Activated CD8-positive, alpha-beta memory T cell treated with anti-CD3 and anti-CD28 coated beads, Interleukin-2, amount 10 ng/mL, durations not matched to agents 7 days and 5 days (primary cell): ENCODE measurements at regions of chr15 and their contacts with region 1.

Region 1: DNA sequence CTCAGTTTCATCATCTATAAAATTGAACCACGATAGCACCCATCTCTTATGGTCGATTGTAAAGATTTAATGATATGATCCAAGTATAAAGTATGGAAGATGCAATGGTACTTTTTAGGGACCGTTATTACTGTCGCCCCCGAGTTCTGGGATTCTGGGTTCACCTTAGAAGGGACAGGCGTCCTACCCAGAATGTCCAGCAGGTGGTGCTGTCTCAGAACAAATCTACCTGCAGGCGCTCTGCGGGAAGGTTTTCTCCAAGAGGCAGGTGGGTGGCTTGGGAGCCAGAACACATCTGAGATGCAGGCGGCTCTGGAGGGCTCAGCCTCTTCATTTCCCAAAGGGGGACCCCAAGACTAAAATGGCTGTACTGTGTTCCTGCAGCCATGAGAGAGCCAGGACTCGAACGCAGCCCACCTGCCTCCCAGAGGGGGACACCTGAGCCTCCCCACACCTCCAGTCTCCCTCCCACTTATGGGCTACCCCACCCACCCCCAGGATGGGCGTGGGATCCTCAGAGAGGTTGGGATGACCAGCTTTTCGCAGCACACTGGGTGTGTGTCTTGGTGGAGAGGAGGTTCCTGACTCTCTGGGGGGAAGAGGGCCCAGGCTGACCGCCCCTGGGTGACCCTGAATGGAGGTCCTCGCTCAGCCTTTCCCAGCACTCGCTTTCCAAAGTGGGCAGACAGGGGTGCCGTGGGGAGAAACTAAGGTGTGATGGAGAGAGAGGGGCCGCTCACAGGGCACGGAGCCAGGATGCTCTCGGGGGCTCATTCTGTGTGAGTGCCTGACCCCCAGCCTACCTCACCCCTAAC is 28.1 kb upstream of the CORO2B start:
- DNase-seq: peak; percentile 82
- ATAC-seq: no peak
- H3K4me3 Mint-ChIP-seq: no peak overlapping the region
- H3K27ac Mint-ChIP-seq: no peak overlapping the region
- H3K4me1 Mint-ChIP-seq: peaks cover 10% of the 10 kb centered on the region
- H3K27me3 Mint-ChIP-seq: peaks cover 43% of the 10 kb centered on the region

Region 2: DNA sequence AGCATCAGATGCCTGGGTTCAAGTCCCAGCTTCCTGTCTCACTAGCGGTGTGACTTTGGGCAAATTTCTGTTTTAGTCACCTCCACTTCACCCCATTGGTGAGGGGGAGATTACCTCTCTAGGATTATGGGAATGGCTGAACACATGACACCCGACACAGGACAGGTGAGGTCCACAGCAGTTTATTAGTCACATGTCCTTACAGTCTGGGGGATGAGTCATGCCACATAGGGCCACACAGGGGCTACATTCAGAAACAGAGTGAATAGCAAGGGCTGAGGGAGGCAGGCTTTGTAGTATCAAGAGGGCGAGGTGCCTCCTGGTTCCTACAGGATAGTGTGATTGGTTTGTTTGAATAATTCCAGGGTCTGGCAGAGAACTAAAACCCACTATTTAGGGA is 103.5 kb before region 1 on chr15:
- CTCF ChIA-PET with region 1: no interaction called
- DNase-seq: peak; percentile 11
- ATAC-seq: no peak
- H3K4me3 Mint-ChIP-seq: no peak overlapping the region
- H3K27ac Mint-ChIP-seq: no peak overlapping the region
- H3K4me1 Mint-ChIP-seq: no peaks in the 10 kb centered on the region
- H3K27me3 Mint-ChIP-seq: peaks cover 77% of the 10 kb centered on the region

Region 3: DNA sequence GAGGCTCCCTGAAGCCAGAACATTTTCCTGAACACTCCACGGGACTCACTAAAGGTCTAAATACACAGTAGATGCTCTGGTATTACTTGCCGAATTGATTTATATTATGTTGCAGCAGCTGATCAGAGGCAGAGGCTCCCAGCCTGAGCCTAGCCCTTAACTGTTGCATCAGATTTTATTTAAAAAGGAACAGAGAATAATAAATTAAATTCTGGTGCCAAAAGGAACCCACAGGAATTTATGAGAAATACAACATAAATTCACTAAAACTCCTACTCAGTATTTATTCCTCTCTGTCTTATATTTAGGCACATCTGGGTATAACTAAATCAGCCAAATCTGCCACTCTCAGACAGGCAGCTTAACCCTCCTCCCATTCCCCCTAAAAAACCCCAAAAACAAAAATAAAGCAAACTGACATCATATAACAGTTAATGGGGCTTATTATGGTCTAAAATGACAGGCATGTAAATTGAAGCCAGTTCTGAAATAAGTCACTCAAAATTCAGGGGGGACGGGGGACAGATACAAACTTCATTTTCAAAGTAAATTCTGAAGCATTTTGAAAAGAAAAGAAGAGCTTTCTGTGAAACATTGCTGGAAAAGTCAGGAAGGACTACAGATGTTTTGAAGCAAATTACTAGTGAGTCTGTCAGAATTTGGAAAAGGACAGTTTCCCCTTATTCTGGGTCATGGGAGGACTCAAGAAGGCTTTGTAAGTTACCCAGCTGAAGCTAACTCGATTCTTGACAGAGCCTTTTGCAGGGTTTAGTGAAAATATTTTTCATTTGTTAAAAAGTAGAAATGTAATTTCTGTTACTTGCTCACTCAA is 25.7 kb before region 1 on chr15:
- CTCF ChIA-PET with region 1: interaction called, 13 read pairs
- DNase-seq: no peak
- ATAC-seq: no peak
- H3K4me3 Mint-ChIP-seq: no peak overlapping the region
- H3K27ac Mint-ChIP-seq: no peak overlapping the region
- H3K4me1 Mint-ChIP-seq: peaks cover 37% of the 10 kb centered on the region
- H3K27me3 Mint-ChIP-seq: peaks cover 70% of the 10 kb centered on the region

Region 4: DNA sequence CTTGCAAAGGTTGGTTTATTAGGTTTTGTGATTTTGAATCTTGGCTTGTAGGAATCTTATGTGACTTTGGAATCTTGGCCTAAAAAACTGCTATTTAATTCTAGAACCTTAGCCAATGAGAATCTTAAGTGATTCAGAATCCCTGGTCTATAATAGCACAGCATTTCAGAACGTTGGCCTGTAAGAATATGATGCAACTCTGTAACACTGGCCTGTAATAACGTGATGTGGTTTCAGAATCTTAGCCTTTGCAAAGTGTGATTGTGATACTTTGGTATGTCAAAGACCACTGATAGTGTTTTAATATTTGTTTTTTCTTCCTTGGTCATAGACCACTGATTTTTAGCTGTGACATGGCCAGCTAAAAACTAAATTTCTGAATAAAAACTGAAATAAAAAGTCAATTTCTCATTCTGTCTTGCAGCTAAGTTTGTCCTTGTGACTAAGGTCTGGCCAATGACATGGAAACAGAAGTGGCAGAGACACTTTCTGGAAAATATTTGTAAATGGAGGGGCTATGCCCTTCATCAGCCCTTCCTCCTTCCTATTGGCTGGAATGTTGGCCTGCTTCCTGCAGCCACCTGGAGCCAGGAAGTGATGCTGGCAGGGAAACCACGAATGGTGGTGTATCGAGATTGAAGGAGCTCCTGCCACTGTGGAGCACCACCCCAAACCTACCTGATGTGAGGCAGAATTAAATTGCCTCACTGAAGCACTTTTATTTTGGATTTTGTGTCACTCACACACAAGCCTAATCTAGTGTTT is 14.2 kb before region 1 on chr15:
- CTCF ChIA-PET with region 1: interaction called, 23 read pairs
- DNase-seq: no peak
- ATAC-seq: no peak
- H3K4me3 Mint-ChIP-seq: no peak overlapping the region
- H3K27ac Mint-ChIP-seq: no peak overlapping the region
- H3K4me1 Mint-ChIP-seq: peaks cover 2% of the 10 kb centered on the region
- H3K27me3 Mint-ChIP-seq: peaks cover 53% of the 10 kb centered on the region